Right ventricle myocardium inferior (tissue), 1 donor: ENCODE measurements at regions of chr12 and their contacts with region 1.

Region 1: GRCh38 chr12:95998611-95999286 is 2.6 kb upstream of the HAL start:
- DNase-seq: no peak
- ATAC-seq: peak; percentile 85

Region 2: GRCh38 chr12:95574799-95575452 is 423.8 kb before region 1 on chr12:
- intact Hi-C with region 1: loop called (anchors 5 kb)
- DNase-seq: no peak
- ATAC-seq: no peak

Region 3: GRCh38 chr12:95918194-95918993 is 80.4 kb before region 1 on chr12:
- intact Hi-C with region 1: loop called (anchors 1 kb)
- DNase-seq: no peak
- ATAC-seq: peak; percentile 57

Region 4: DNA sequence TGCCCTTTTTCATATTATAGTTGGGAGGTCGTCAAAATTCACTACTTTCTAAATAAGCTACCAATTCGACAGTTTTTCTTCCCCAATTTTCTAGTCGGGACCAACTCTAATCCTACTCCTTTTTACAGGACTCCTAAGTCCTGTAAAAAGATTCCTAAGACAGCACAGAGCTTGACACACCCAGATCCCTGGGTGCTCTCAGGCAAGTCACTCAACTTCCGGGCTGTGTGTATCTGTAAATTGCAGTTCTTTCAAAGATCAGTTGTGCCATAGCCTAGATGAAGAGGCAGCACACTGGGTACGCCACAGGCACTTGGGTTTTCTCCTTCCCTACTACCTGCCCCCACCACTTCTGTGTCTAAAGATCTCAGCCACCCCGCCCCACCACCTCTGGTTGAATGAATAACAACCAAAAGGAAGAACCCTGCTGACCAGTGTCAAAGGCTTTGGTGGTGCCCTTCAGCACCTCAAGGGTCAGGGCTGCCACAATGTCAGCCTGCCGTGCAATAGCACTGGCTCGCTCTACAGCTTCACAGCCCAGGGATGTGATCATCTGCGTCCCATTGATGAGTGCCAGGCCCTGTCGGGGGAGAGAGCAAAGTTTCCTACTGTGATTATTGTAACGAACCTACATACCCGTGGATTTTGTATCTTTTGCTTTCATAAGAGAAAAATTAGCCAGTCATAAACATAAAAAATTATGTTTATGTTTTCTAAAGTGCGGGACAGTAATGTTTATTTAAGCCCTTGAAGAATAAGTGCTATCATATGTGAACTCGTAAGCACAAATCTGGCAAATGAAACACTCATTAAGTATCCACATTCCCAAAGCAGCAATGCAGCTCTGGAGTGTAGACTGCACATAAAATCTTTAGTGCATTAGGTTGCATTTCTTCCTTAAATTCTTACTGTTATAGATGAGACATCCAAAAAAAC is 11.8 kb before region 1 on chr12:
- intact Hi-C with region 1: no loop called
- DNase-seq: no peak
- ATAC-seq: no peak

Region 5: GRCh38 chr12:96140174-96140573 is 141.4 kb after region 1 on chr12:
- intact Hi-C with region 1: no loop called
- DNase-seq: no peak
- ATAC-seq: no peak

Region 6: GRCh38 chr12:96164951-96165811 is 166.4 kb after region 1 on chr12:
- intact Hi-C with region 1: no loop called
- DNase-seq: no peak
- ATAC-seq: peak; percentile 55